ENCODE measurements at regions of chr1 and their contacts with region 1.

Region 1: DNA sequence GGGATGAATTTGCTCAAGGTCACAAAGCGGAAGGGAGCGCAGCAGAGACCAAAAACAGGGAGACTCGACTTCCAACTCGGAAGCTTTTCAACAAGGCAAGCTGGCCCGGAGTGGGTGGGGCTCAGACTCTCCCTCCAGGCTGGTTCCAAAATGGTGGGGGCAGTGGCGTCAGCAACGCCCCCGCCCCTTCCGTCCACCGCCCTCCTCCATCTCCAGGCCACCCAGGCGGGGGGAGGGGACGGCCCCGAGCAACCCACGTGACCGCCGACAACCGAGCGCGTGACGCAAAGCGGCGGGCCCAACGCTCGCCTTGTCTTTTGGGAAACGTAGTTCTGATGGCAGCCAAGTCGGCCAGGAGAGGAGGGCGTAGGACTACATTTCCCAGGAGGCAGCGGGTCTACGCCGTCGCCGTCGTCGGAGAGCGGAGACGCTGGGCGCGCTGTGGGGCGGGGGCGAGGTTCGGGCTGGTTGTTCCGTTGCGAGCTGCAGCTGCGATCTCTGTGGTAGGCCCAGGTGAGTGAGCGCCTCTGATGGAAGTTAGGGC is at the start of gene THRAP3:
- DNase-seq: peak; percentile 100
- H3K4me3 Mint-ChIP-seq: peak within 1 kb of the TSS; percentile 90
- H3K27ac Mint-ChIP-seq: peak within 1 kb of the TSS; percentile 98
- H3K4me1 Mint-ChIP-seq: peaks cover 38% of the 10 kb centered on the region
- H3K27me3 Mint-ChIP-seq: no peaks in the 10 kb centered on the region
- total RNA-seq, gene THRAP3: 128 to 133 TPM

Region 2: GRCh38 chr1:36160949-36161485 is 63.0 kb before region 1 on chr1:
- CTCF ChIA-PET with region 1: interaction called, 3 read pairs
- intact Hi-C with region 1: loop called (anchors 1 kb)
- DNase-seq: peak; percentile 89
- H3K4me3 Mint-ChIP-seq: peak overlapping the region; percentile 83
- H3K27ac Mint-ChIP-seq: peak overlapping the region; percentile 93
- H3K4me1 Mint-ChIP-seq: peaks cover 57% of the 10 kb centered on the region
- H3K27me3 Mint-ChIP-seq: no peaks in the 10 kb centered on the region

Region 3: DNA sequence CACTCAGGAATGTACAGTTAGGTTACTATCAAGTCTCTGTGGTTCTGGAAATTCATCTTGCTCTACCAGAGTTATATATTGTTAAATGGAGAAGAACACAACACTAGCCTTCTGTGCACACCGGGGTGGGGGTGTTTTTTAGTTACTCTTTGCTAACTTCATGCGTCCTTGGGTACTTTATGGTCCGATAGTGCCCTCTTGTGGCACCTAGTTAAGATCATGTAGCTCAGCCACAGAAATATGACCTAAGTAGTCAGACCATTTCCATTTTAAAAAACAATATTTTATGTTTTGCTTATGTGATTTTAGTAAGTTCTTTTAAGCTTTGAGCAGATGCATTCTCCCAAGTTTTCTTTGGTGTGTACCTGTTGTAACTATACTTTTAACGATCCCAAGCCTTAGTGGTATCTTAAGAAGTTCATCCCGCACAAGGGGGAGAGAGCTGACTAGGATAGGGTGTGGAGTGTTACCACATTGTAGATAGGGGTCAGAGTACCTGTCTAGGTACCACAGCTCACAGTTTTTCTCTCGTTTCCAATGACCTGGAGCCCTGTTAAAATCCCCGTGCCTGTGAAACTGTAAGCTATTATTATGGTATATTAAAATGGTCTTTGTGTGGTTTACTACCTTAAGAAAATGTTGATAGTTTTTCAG is 61.5 kb after region 1 on chr1:
- CTCF ChIA-PET with region 1: interaction called, 9 read pairs
- intact Hi-C with region 1: loop called (anchors 1 kb)
- DNase-seq: peak; percentile 79
- H3K4me3 Mint-ChIP-seq: no peak overlapping the region
- H3K27ac Mint-ChIP-seq: peak overlapping the region; percentile 73
- H3K4me1 Mint-ChIP-seq: peaks cover 33% of the 10 kb centered on the region
- H3K27me3 Mint-ChIP-seq: no peaks in the 10 kb centered on the region

Region 4: DNA sequence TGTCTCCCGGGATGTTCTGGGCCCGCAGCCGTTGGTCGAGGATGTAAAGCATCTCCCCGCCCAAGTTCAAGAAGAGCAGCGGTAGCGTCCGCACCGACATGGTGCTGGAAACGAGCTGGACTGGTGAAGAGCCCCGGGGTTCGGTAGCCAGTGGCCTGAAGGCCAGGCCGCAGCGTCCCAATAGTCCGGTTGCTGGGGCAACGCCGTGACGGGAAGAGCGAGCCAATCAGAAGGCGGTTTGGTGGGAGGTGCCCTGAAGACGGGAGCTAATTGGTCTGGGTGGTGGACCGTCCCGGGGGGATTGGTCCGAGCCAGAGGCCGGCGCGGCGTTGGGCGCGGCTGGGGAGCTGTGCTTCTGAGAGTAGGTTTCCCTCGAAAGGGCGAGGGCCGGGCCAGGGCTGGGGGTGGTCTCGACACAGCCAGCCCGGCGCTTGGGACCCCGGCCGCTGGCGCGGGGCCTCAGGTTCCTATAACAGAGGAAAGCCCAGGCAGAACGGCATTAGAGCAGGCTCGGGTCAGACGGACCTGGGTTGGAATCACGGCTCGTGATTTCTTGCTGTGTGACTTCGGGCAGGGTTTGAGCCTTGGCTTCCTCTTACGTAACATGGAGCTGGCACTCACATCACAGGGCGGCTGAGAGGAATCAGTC is 226.3 kb after region 1 on chr1 and contains the start of gene OSCP1:
- CTCF ChIA-PET with region 1: no interaction called
- intact Hi-C with region 1: loop called (anchors 1 kb)
- DNase-seq: peak; percentile 87
- H3K4me3 Mint-ChIP-seq: peak within 1 kb of the TSS; percentile 90
- H3K27ac Mint-ChIP-seq: peak within 1 kb of the TSS; percentile 71
- H3K4me1 Mint-ChIP-seq: peaks cover 17% of the 10 kb centered on the region
- H3K27me3 Mint-ChIP-seq: no peaks in the 10 kb centered on the region
- total RNA-seq, gene OSCP1: 2.2 to 2.6 TPM

Region 5: GRCh38 chr1:37479255-37480124 is 1255.4 kb after region 1 on chr1:
- CTCF ChIA-PET with region 1: no interaction called
- intact Hi-C with region 1: loop called (anchors 5 kb)
- DNase-seq: peak; percentile 97
- H3K4me3 Mint-ChIP-seq: peak overlapping the region; percentile 87
- H3K27ac Mint-ChIP-seq: peak overlapping the region; percentile 99
- H3K4me1 Mint-ChIP-seq: peaks cover 35% of the 10 kb centered on the region
- H3K27me3 Mint-ChIP-seq: no peaks in the 10 kb centered on the region

Measured in activated naive CD4-positive, alpha-beta T cell treated with anti-CD3 and anti-CD28 coated beads for 36 hours (primary cell).